Transverse colon (tissue), 4 donors: ENCODE measurements at regions of chr9 and their contacts with region 1.

Region 1: DNA sequence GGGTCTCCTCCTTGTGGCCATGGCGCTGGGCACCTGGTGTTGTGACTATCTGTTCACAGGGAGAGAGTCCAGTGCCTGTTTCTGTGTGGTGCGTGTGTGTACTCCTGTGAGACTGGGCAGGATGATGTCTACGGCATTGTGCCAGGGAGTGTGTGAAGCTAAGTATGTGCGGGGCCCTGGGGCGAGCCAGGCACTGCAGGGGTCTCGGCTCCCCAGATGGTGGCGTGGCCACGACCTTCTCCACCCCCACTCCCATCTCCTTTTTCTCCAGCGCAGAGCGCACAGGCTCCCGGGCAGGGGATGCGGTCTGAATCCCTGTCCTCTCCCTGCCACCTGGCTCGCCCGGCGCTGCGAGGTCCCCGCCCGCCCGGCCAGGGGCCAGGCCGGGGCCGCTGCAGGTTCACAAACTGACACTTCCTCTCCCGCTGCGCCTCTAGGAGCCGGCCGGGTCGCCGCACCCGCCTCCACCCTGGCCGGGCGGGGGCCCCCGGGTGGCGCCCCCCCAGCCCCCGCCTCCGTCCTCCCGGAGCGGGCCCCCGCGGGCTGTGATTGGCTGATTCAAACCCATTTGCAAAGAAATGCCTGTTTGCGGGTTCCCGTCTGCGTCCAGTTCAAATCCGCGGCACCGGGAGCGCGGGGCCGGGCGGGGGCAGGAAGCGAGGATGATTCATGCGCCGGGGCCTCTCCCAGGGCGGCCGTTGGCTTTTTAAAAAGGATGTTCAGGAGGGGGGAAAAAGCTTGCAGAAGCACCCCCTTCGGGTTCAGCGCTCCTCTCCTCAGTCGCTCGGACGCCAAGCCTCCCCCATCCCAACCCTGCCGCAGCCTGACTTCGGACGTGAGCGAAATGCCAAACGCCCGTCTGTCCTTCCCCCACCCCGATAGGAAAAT is 790 bp downstream of the PHF19 start:
- DNase-seq: peak; percentile 89
- H3K4me3 ChIP-seq: peak overlapping the region; percentile 63 to 78 (median 68)
- H3K27ac ChIP-seq: peak overlapping the region; percentile 87 to 96 (median 95)
- H3K4me1 ChIP-seq: peaks cover 3 to 26% (median 18%) of the 10 kb centered on the region in 4 donors
- H3K27me3 ChIP-seq: no peaks in the 10 kb centered on the region
- CTCF ChIP-seq: peak in 1 of 5 experiments; percentile 20
- EP300 ChIP-seq: no peak
- POLR2A ChIP-seq: peak; percentile 37

Region 2: DNA sequence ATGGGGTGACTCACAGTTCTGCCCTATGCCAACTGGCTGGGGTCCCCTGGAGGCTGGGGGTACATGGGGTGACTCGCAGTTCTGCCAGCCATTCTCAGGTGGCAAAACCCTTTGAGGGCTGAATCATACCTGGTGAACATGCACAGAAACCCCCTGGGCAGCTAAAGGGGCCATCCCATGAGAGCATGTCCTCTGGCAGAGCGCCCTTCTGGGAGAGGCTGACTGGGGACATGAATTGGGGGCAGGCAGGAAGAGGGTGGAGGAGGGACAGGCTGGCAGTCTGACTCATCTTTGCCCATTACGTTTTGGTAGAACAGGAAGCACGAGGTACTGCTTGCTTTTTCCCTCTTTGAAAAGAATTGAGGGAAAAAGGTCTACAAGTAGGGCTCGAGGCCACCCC is 33.7 kb after region 1 on chr9:
- in situ Hi-C with region 1: no loop called
- intact Hi-C with region 1: no loop called
- DNase-seq: no peak
- H3K4me3 ChIP-seq: no peak overlapping the region
- H3K27ac ChIP-seq: no peak overlapping the region
- H3K4me1 ChIP-seq: no peaks in the 10 kb centered on the region
- H3K27me3 ChIP-seq: no peaks in the 10 kb centered on the region
- CTCF ChIP-seq: no peak
- EP300 ChIP-seq: no peak
- POLR2A ChIP-seq: no peak

Region 3: GRCh38 chr9:120936011-120936763 is 60.0 kb after region 1 on chr9:
- in situ Hi-C with region 1: loop called in 1 of 4 experiments (anchors 5 kb)
- intact Hi-C with region 1: loop called (anchors 2 kb)
- DNase-seq: peak; percentile 96
- H3K4me3 ChIP-seq: no peak overlapping the region
- H3K27ac ChIP-seq: peak overlapping the region; percentile 75 to 91 (median 86)
- H3K4me1 ChIP-seq: peaks cover 24 to 51% (median 28%) of the 10 kb centered on the region in 4 donors
- H3K27me3 ChIP-seq: no peaks in the 10 kb centered on the region
- CTCF ChIP-seq: peak; percentile 87 to 92 (median 89)
- EP300 ChIP-seq: no peak
- POLR2A ChIP-seq: no peak